Activated CD4-positive, alpha-beta memory T cell treated with anti-CD3 and anti-CD28 coated beads, Interleukin-2, amount 10 ng/mL, durations not matched to agents 7 days and 5 days (primary cell): ENCODE measurements at regions of chr1 and their contacts with region 1.

Region 1: DNA sequence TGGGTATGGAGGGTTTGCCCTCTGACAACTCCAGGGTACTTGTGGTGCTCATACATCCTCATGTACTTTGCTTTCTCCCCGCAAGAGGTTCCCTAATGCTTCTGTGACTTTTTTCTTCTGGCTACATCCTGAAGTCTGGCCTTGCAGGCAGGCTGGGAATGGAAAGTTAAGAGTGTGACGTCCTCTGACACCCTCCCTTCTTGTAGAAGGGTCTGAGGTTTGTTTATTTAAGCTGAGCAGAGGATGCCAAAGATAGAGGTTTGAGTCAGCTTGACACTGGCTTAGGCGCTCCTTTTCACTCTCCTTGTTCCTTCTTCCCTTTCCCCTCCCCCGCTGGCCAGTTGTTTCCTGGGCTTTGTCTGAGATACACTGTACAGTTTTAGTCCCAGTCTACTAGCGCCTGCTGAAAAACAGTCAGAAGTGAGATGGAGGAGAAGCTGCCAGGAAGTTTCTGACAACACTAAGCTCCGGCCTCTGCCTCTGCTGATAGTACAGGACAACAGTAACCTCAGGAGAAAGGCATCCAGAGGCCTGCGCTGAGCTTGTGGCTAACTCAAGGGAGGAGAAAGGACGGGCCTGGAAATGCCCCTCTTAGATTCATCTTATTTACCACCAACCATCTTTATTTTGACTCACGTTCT is at the start of gene MACF1:
- DNase-seq: peak; percentile 53
- H3K4me3 Mint-ChIP-seq: peak within 1 kb of the TSS; percentile 86
- H3K27ac Mint-ChIP-seq: peak within 1 kb of the TSS; percentile 99
- H3K4me1 Mint-ChIP-seq: peaks cover 52% of the 10 kb centered on the region
- H3K27me3 Mint-ChIP-seq: no peaks in the 10 kb centered on the region
- total RNA-seq, gene MACF1: 345 to 381 TPM

Region 2: GRCh38 chr1:39183503-39184353 is 20.8 kb before region 1 on chr1:
- CTCF ChIA-PET with region 1: interaction called, 150 read pairs
- POLR2A ChIA-PET with region 1: interaction called, 223 read pairs
- DNase-seq: peak; percentile 84
- H3K4me3 Mint-ChIP-seq: no peak overlapping the region
- H3K27ac Mint-ChIP-seq: peak overlapping the region; percentile 88
- H3K4me1 Mint-ChIP-seq: peaks cover 50% of the 10 kb centered on the region
- H3K27me3 Mint-ChIP-seq: no peaks in the 10 kb centered on the region

Region 3: GRCh38 chr1:39214998-39215873 is 10.7 kb after region 1 on chr1:
- CTCF ChIA-PET with region 1: interaction called, 33 read pairs
- POLR2A ChIA-PET with region 1: interaction called, 238 read pairs
- DNase-seq: peak; percentile 51
- H3K4me3 Mint-ChIP-seq: peak overlapping the region; percentile 93
- H3K27ac Mint-ChIP-seq: peak overlapping the region; percentile 85
- H3K4me1 Mint-ChIP-seq: peaks cover 58% of the 10 kb centered on the region
- H3K27me3 Mint-ChIP-seq: no peaks in the 10 kb centered on the region

Region 4: DNA sequence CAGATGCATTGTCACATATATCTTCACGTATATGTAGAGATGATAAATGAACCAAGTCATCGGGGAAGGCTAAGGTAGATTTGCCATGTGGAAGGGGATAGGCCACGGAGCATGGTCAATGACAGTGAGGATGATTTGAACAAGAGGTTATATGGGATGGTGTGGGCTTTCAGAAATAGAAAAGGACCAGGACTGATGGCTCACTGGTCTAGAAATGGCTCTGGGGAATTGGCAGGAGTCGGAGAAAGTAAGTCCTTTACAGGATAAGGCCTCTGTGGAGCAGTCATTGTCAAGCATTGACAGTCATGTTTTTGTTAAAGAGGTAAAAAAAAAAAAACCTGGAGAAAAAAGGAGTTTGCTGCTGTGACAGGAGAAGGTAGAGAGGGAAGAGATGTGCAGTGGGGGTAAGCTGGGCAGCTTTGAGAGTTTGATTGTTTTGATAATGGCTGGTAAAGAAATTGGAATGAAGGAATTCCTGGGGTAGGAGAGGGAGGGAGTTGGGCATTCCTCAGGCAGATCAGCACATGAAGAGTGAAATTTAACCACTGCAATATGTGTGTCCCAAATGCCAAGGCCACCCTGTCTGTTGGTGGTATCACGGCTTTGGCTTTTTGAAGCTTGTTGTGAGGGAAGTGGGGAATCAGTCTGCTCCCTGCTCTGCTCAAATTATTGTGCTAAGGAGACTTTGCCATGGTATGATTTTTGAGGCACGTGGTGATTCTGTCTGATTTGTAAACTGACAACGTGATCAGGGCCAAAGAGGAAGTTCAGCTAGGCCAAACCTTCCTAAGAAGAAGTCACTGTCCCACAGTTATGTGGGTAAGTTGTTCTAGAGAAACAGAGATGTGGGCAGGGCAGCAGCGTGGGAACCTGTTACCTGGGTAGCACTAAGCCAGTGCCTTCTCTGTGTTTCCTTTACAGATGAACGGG is 26.0 kb after region 1 on chr1:
- CTCF ChIA-PET with region 1: interaction called, 5 read pairs
- POLR2A ChIA-PET with region 1: interaction called, 15 read pairs
- DNase-seq: peak; percentile 31
- H3K4me3 Mint-ChIP-seq: no peak overlapping the region
- H3K27ac Mint-ChIP-seq: peak overlapping the region; percentile 66
- H3K4me1 Mint-ChIP-seq: peaks cover 49% of the 10 kb centered on the region
- H3K27me3 Mint-ChIP-seq: no peaks in the 10 kb centered on the region

Region 5: GRCh38 chr1:39238476-39238875 is 33.9 kb after region 1 on chr1:
- CTCF ChIA-PET with region 1: no interaction called
- POLR2A ChIA-PET with region 1: interaction called, 10 read pairs
- DNase-seq: no peak
- H3K4me3 Mint-ChIP-seq: no peak overlapping the region
- H3K27ac Mint-ChIP-seq: peak overlapping the region; percentile 5
- H3K4me1 Mint-ChIP-seq: peaks cover 34% of the 10 kb centered on the region
- H3K27me3 Mint-ChIP-seq: no peaks in the 10 kb centered on the region

Region 6: GRCh38 chr1:39258146-39258924 is 53.8 kb after region 1 on chr1:
- CTCF ChIA-PET with region 1: interaction called, 22 read pairs
- POLR2A ChIA-PET with region 1: interaction called, 17 read pairs
- DNase-seq: peak; percentile 61
- H3K4me3 Mint-ChIP-seq: no peak overlapping the region
- H3K27ac Mint-ChIP-seq: peak overlapping the region; percentile 11
- H3K4me1 Mint-ChIP-seq: peaks cover 28% of the 10 kb centered on the region
- H3K27me3 Mint-ChIP-seq: no peaks in the 10 kb centered on the region